ENCODE measurements at regions of chr5 and their contacts with region 1.

Region 1: DNA sequence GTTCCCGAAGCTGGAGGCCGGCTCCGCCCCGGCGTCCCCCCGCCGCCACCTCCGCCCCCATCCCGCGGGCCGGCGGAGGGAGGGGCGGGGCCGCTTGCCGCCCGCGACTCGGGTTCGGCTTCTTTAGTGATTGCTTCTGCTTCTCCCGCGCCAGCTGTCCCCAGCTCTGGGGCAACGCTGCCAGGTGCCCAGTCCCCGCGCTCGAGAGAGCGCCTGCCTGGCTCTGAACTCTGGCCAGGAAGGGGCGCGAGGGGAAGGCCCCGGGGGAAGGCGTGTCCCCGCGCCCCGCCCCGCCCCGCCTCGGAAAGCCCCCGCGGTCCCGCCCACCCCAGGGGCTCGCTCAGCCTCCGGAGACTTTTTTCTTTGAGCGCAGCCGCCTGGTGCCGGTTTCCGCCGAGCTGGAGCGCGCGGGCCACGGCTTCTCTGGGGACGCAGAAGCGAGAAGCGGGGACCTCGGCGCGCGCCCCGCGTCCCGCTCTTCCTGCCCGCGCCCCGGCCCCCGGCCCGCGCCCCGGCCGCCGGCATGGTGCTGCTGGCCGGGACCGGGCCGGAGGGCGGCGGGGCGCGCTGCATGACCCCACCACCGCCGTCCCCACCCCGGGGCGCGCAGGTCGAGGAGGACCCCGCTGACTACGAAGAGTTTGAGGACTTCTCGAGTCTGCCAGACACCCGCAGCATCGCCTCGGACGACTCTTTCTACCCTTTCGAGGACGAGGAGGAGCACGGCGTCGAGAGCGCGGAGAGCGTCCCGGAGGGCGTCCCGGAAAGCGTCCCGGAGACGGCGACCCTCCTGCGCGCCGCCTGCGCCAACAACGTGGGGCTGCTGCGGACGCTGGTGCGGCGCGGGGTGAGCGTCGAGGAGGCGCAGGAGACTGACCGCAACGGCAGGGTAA is at the start of gene ANKRD33B:
- DNase-seq: peak; percentile 90
- ATAC-seq: peak; percentile 84
- H3K4me3 Mint-ChIP-seq: peak within 1 kb of the TSS; percentile 78
- H3K27ac Mint-ChIP-seq: no peak within 1 kb of the TSS
- H3K4me1 Mint-ChIP-seq: peaks cover 19% of the 10 kb centered on the region
- H3K27me3 Mint-ChIP-seq: peaks cover 13% of the 10 kb centered on the region
- total RNA-seq, gene ANKRD33B: 4.6 to 4.9 TPM

Region 2: DNA sequence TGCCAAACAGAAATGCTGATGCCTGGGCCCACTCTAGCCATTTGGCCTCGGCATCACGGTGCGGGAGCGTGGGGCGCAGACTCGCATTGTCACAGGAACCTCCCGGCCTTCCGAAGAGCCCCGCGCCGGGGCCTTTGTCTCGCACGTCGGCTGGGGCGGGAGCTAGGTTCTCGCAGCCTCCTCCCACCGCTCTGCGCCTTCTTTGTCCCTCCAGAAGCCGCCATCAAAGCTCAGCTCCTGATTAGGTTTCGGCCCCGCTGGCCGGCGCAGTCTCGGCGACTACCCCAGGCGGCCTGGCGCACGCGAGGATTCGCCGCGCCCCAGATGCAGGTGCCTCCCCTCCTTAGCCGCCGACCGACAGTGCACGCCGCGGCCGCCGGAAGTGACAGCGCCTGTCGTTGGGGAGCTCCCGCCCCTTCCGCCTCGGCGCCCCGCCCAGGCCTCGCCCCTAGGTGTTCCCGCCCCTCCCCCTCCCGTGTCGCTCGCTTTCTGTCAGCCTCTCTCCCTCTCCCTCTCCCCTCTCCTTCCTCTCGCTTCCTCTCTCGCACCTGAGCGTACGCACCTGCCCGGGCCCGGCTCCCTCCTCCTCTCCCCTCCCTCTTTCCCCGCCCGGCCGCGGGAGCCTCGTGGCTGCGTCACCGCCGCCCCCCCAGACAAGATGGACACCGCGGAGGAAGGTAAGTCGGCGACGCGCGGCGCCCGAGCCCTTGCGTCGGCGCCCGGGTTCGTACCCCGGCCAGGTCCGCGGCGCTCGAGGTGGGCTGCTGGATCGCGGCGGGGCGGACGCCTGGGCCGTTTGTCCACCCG is 210.7 kb before region 1 on chr5 and contains the start of gene MARCHF6:
- CTCF ChIA-PET with region 1: no interaction called
- POLR2A ChIA-PET with region 1: no interaction called
- intact Hi-C with region 1: loop called (anchors 2 to 10 kb)
- DNase-seq: peak; percentile 98
- ATAC-seq: peak; percentile 81
- H3K4me3 Mint-ChIP-seq: peak within 1 kb of the TSS; percentile 97
- H3K27ac Mint-ChIP-seq: peak within 1 kb of the TSS; percentile 99
- H3K4me1 Mint-ChIP-seq: peaks cover 39% of the 10 kb centered on the region
- H3K27me3 Mint-ChIP-seq: no peaks in the 10 kb centered on the region
- total RNA-seq, gene MARCHF6: 67.3 to 92.2 TPM

Region 3: DNA sequence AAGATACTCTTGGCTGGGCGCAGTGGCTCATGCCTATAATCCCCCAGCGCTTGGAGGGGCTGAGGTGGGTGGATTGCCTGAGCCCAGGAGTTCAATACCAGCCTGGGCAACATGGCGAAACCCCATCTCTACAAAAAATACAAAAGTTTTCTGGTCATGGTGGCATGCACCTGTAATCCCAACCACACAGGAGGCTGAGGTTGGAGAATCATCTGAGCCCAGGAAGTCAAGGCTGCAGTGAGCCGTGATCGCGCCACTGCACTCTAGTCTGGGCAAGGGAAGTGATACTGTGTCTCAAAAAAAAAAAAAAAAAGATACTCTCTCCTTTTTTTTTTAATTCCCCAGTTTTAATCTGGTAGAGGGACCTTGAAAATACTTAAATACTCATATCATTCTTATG is 14.7 kb after region 1 on chr5:
- CTCF ChIA-PET with region 1: interaction called, 4 read pairs
- POLR2A ChIA-PET with region 1: interaction called, 5 read pairs
- intact Hi-C with region 1: loop called in 1 of 2 experiments (anchors 1 kb)
- DNase-seq: peak; percentile 49
- ATAC-seq: no peak
- H3K4me3 Mint-ChIP-seq: no peak overlapping the region
- H3K27ac Mint-ChIP-seq: no peak overlapping the region
- H3K4me1 Mint-ChIP-seq: peaks cover 47% of the 10 kb centered on the region
- H3K27me3 Mint-ChIP-seq: peaks cover 6% of the 10 kb centered on the region

Region 4: DNA sequence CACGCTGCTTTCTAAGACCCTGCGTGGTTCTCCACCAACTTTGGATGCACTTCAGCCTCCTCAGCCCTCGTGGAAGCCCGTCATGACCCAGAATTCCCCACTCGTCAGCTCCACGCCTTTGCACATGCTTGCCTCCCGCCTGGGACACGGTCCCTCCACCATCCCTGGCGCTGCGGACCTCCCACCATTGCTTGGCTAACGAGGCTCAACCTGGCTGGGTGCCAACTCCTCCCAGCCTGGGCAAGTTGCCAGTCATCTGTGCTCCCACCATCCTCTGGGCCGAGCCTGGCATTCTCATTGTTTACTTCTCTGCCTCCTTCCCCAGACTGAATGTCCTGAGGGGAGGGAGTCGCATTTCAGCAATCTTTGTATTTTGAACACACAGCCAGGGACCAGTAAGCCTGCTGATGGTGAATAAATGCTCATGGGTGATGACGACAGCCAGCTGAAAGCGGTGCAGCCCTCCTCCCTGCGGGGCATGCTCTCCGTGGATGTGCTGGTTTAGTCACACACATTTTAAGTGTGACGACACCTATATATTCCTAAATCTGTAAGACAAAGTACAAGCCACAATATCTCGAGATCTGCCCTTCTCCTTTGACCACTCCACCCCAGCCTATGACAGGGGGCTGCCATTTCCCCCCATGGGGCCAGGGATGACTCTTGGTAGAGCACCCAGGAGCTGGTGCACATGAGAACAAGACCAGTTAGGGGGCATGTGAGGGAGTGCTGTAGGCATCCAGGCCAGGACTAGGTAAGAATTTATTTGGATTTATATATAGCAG is 37.2 kb after region 1 on chr5:
- CTCF ChIA-PET with region 1: no interaction called
- POLR2A ChIA-PET with region 1: no interaction called
- intact Hi-C with region 1: loop called (anchors 2 to 5 kb)
- DNase-seq: peak; percentile 19
- ATAC-seq: peak; percentile 61
- H3K4me3 Mint-ChIP-seq: no peak overlapping the region
- H3K27ac Mint-ChIP-seq: no peak overlapping the region
- H3K4me1 Mint-ChIP-seq: peaks cover 27% of the 10 kb centered on the region
- H3K27me3 Mint-ChIP-seq: peaks cover 6% of the 10 kb centered on the region

Region 5: GRCh38 chr5:10635257-10635866 is 71.2 kb after region 1 on chr5:
- CTCF ChIA-PET with region 1: no interaction called
- POLR2A ChIA-PET with region 1: interaction called, 7 read pairs
- intact Hi-C with region 1: loop called in 1 of 2 experiments (anchors 1 kb)
- DNase-seq: peak; percentile 91
- ATAC-seq: peak; percentile 91
- H3K4me3 Mint-ChIP-seq: peak overlapping the region; percentile 38
- H3K27ac Mint-ChIP-seq: peak overlapping the region; percentile 87
- H3K4me1 Mint-ChIP-seq: peaks cover 56% of the 10 kb centered on the region
- H3K27me3 Mint-ChIP-seq: peaks cover 2% of the 10 kb centered on the region

Region 6: GRCh38 chr5:10761166-10761932 is 197.2 kb after region 1 on chr5 and contains the start of gene DAP:
- CTCF ChIA-PET with region 1: no interaction called
- POLR2A ChIA-PET with region 1: no interaction called
- intact Hi-C with region 1: loop called in 1 of 2 experiments (anchors 1 kb)
- DNase-seq: peak; percentile 92
- ATAC-seq: peak; percentile 82
- H3K4me3 Mint-ChIP-seq: peak within 1 kb of the TSS; percentile 83
- H3K27ac Mint-ChIP-seq: peak within 1 kb of the TSS; percentile 90
- H3K4me1 Mint-ChIP-seq: peaks cover 49% of the 10 kb centered on the region
- H3K27me3 Mint-ChIP-seq: peaks cover 3% of the 10 kb centered on the region
- total RNA-seq, gene DAP: 41.4 to 44.0 TPM